Naive thymus-derived CD4-positive, alpha-beta T cell (primary cell): ENCODE measurements at regions of chr15 and their contacts with region 1.

Region 1: DNA sequence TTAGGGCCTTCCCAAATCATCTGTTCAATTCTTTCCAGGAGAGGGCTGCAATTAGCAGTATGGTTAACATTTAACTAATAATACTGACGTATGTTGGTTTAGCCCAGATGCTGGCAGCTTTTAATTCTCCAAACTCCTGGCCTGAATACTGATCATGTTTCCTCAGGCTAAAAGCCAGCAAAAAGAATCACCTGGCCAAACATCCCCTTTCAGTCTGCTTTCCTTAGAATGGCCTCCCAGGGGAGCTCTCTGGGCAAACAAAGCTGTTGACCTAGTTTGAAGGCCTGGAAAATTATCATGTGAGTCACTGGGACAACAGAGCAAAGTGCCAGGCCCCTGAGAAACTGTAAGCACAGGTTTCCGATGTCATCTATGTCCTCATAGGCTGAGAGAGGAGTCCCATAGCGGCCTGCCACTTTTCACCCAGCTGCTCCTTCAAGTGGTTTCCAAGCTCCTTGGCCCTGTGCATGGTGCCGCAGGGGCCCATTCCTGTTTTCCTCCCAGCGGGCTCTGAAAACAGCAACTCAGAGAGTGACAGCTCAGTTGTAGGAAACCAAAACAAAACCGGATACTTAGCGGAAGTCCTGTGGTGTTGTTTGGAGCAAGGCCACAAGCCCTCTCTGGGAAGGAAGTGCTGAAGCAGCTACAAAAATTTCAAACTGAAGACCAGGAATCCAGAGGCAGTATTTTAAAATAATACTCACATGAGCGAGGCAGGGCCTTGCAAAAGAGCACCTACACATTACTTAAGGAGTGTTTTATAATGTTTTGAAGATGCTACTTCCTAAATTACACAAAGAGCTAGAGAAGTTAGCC is 36.5 kb upstream of the RAB11A start:
- DNase-seq: peak; percentile 27 to 69 (median 63)
- ATAC-seq: peak; percentile 67
- H3K4me3 ChIP-seq: peak overlapping the region; percentile 19
- H3K4me3 Mint-ChIP-seq: peak overlapping the region; percentile 73 to 87 (median 83)
- H3K27ac ChIP-seq: peak overlapping the region; percentile 68
- H3K27ac Mint-ChIP-seq: peak overlapping the region; percentile 87 to 99 (median 95)
- H3K4me1 ChIP-seq: peaks cover 42 to 50% of the 10 kb centered on the region in 2 donors
- H3K4me1 Mint-ChIP-seq: peaks cover 31 to 70% (median 59%) of the 10 kb centered on the region in 7 donors
- H3K27me3 ChIP-seq: no peaks in the 10 kb centered on the region
- H3K27me3 Mint-ChIP-seq: no peaks in the 10 kb centered on the region

Region 2: DNA sequence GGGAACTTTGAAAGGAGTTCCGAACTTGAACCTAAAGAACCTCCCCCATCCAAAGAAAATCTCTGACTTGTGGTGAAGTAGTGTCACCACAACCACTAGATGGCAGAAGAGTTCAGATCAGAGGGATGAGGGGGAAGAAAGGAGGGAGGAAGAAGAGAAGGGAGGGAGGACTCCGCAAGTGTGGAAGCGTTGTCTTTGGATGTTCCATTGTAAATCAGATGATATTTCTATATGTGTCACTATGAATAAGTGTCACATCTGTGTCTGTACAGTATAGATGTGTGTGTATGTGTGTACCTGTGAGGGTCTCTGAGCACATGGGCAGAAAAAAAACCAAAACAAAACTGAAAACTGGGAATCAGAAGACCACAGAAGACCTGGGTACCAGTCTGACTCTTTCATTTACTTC is 194.1 kb before region 1 on chr15:
- CTCF ChIA-PET with region 1: interaction called, 5 read pairs
- POLR2A ChIA-PET with region 1: no interaction called
- intact Hi-C with region 1: loop called (anchors 2 kb)
- DNase-seq: peak in 8 of 9 donors; percentile 34 to 75 (median 68)
- ATAC-seq: peak; percentile 92
- H3K4me3 ChIP-seq: no peak overlapping the region
- H3K4me3 Mint-ChIP-seq: peak overlapping the region in 5 of 10 donors; percentile 0 to 60 (median 4)
- H3K27ac ChIP-seq: no peak overlapping the region
- H3K27ac Mint-ChIP-seq: peak overlapping the region in 3 of 9 donors; percentile 6 to 15 (median 11)
- H3K4me1 ChIP-seq: no peaks in the 10 kb centered on the region
- H3K4me1 Mint-ChIP-seq: peaks cover 7 to 19% (median 10%) of the 10 kb centered on the region in 7 donors
- H3K27me3 ChIP-seq: no peaks in the 10 kb centered on the region
- H3K27me3 Mint-ChIP-seq: no peaks in the 10 kb centered on the region

Region 3: GRCh38 chr15:65751431-65751830 is 81.3 kb before region 1 on chr15:
- CTCF ChIA-PET with region 1: interaction called, 3 read pairs
- POLR2A ChIA-PET with region 1: no interaction called
- intact Hi-C with region 1: loop called in 1 of 2 experiments (anchors 2 kb)
- DNase-seq: no peak
- ATAC-seq: no peak
- H3K4me3 ChIP-seq: no peak overlapping the region
- H3K4me3 Mint-ChIP-seq: no peak overlapping the region
- H3K27ac ChIP-seq: no peak overlapping the region
- H3K27ac Mint-ChIP-seq: peak overlapping the region in 5 of 9 donors; percentile 2 to 43 (median 2)
- H3K4me1 ChIP-seq: no peaks in the 10 kb centered on the region
- H3K4me1 Mint-ChIP-seq: peaks cover 0 to 24% (median 8%) of the 10 kb centered on the region in 7 donors
- H3K27me3 ChIP-seq: no peaks in the 10 kb centered on the region
- H3K27me3 Mint-ChIP-seq: no peaks in the 10 kb centered on the region

Region 4: GRCh38 chr15:65804252-65804931 is 28.4 kb before region 1 on chr15:
- CTCF ChIA-PET with region 1: interaction called, 3 read pairs
- POLR2A ChIA-PET with region 1: interaction called, 8 read pairs
- intact Hi-C with region 1: loop called in 1 of 2 experiments (anchors 2 kb)
- DNase-seq: no peak
- ATAC-seq: peak; percentile 67
- H3K4me3 ChIP-seq: no peak overlapping the region
- H3K4me3 Mint-ChIP-seq: no peak overlapping the region
- H3K27ac ChIP-seq: no peak overlapping the region
- H3K27ac Mint-ChIP-seq: peak overlapping the region in 6 of 9 donors; percentile 1 to 98 (median 80)
- H3K4me1 ChIP-seq: peaks cover 20 to 27% of the 10 kb centered on the region in 2 donors
- H3K4me1 Mint-ChIP-seq: peaks cover 4 to 42% (median 35%) of the 10 kb centered on the region in 7 donors
- H3K27me3 ChIP-seq: no peaks in the 10 kb centered on the region
- H3K27me3 Mint-ChIP-seq: no peaks in the 10 kb centered on the region

Region 5: DNA sequence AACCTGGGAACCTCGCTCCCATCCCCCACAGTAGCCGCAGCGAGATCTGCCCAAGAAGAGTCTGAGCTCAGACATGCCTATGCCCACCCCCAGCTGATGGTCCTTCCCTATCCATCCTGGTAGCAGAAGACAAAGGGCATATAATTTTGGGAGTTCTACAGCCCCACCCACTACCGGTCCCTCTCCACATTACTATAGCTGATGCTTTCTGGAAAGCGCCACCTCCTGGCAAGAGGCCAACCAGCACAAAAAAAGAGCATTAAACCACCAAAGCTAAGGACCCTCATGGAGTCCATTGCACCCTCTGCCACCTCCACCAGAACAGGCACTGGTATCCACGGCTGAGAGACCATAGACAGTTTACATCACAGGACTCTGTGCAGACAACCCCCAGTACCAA is 252.4 kb after region 1 on chr15:
- CTCF ChIA-PET with region 1: no interaction called
- POLR2A ChIA-PET with region 1: no interaction called
- intact Hi-C with region 1: no loop called
- DNase-seq: peak in 1 of 9 donors; percentile 25
- ATAC-seq: no peak
- H3K4me3 ChIP-seq: no peak overlapping the region
- H3K4me3 Mint-ChIP-seq: no peak overlapping the region
- H3K27ac ChIP-seq: no peak overlapping the region
- H3K27ac Mint-ChIP-seq: no peak overlapping the region
- H3K4me1 ChIP-seq: no peaks in the 10 kb centered on the region
- H3K4me1 Mint-ChIP-seq: no peaks in the 10 kb centered on the region
- H3K27me3 ChIP-seq: no peaks in the 10 kb centered on the region
- H3K27me3 Mint-ChIP-seq: peaks cover 0 to 46% (median 4%) of the 10 kb centered on the region in 5 donors